ENCODE measurements at regions of chr14 and their contacts with region 1.

Region 1: DNA sequence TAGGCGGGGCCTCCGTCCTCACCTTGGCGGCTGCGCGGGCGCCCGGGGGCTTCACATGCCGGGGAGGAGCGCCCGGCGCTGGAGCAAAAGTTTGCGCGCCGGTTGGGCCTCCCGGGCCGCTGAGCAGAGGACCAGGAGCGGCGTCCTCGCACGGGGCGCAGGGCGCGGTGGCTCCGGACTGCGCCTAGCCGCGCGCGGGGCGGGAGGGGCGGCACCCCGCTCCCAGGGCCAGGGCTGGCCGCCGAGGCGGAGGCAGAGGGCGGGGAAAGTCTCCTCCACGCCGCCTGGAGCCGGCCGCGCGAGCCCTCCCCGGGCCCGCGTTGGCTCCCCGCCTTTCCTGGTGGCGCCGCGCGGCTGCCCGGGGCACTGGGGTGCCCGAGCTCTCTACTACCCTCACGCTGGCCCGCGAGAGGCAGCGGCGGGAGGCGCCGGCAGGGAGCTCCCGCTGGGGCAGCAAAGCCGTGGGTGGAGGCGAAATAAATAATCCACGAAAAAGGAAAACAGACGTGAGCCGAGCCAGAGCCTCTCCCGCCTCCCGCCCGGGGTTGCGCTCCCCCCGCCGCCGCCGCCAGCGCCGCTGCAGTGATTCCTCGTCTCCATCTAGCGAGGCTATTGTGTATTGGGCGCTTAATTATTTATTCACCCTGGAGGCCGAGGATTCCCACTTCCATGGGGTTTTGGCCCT is 400 bp upstream of the PRIMA1 start:
- DNase-seq: no peak
- H3K4me3 ChIP-seq: peak overlapping the region; percentile 68 to 84 (median 78)
- H3K27ac ChIP-seq: peak overlapping the region; percentile 91 to 94 (median 94)
- H3K4me1 ChIP-seq: peaks cover 11 to 77% (median 66%) of the 10 kb centered on the region in 4 donors
- H3K27me3 ChIP-seq: peaks cover 0 to 13% (median 0%) of the 10 kb centered on the region in 4 donors
- CTCF ChIP-seq: peak; percentile 28 to 68 (median 53)
- EP300 ChIP-seq: no peak
- POLR2A ChIP-seq: peak; percentile 46

Region 2: GRCh38 chr14:93742761-93743160 is 45.9 kb before region 1 on chr14:
- intact Hi-C with region 1: loop called (anchors 5 kb)
- DNase-seq: no peak
- H3K4me3 ChIP-seq: no peak overlapping the region
- H3K27ac ChIP-seq: peak overlapping the region; percentile 62 to 73 (median 68)
- H3K4me1 ChIP-seq: peaks cover 21 to 63% (median 48%) of the 10 kb centered on the region in 4 donors
- H3K27me3 ChIP-seq: no peaks in the 10 kb centered on the region
- CTCF ChIP-seq: no peak
- EP300 ChIP-seq: no peak
- POLR2A ChIP-seq: no peak

Region 3: DNA sequence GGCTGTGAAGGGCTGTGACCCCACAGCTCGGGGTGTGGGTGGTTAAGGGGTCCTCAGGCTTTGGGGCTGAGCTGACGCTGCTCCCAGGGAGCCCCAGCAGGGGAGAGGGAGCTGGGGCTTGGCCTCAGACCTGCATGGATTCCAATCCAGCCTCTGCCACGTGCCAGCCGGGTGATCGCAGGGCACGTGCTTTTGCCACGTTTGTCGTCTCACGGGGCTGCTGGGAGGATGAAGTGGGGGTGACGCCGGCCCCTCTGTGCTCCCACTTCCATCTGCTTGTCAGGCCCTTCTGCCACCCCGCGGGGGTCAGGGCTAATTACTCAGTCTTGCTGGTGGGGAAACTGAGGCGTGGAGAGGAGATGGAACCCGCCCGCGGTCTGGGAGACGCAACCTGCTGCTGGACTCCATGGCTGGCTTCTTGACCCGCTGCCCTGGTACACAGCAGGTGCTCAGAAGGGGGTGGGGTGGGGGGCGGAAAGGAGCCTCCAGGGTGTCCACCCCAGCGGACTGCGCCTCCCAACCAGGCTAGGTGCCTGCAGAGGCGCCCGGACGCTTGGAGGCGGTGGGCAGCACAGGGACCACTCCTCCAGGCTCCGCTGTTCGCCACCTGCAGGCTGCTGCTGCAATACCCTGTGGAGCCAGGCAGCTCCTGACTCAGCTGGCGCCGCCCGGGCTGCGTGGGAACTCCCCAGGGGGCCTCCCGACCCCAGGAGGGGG is 36.0 kb after region 1 on chr14:
- intact Hi-C with region 1: no loop called
- DNase-seq: no peak
- H3K4me3 ChIP-seq: no peak overlapping the region
- H3K27ac ChIP-seq: no peak overlapping the region
- H3K4me1 ChIP-seq: no peaks in the 10 kb centered on the region
- H3K27me3 ChIP-seq: peaks cover 0 to 27% (median 3%) of the 10 kb centered on the region in 4 donors
- CTCF ChIP-seq: no peak
- EP300 ChIP-seq: no peak
- POLR2A ChIP-seq: no peak

Region 4: GRCh38 chr14:93892923-93893558 is 104.4 kb after region 1 on chr14:
- intact Hi-C with region 1: loop called (anchors 5 kb)
- DNase-seq: peak; percentile 95
- H3K4me3 ChIP-seq: no peak overlapping the region
- H3K27ac ChIP-seq: peak overlapping the region in 3 of 4 donors; percentile 29 to 50 (median 32)
- H3K4me1 ChIP-seq: peaks cover 12 to 21% (median 17%) of the 10 kb centered on the region in 4 donors
- H3K27me3 ChIP-seq: no peaks in the 10 kb centered on the region
- CTCF ChIP-seq: peak; percentile 95 to 98 (median 98)
- EP300 ChIP-seq: no peak
- POLR2A ChIP-seq: no peak

Measured in esophagus muscularis mucosa (tissue), 4 donors.